ENCODE measurements at regions of chr12 and their contacts with region 1.

Region 1: DNA sequence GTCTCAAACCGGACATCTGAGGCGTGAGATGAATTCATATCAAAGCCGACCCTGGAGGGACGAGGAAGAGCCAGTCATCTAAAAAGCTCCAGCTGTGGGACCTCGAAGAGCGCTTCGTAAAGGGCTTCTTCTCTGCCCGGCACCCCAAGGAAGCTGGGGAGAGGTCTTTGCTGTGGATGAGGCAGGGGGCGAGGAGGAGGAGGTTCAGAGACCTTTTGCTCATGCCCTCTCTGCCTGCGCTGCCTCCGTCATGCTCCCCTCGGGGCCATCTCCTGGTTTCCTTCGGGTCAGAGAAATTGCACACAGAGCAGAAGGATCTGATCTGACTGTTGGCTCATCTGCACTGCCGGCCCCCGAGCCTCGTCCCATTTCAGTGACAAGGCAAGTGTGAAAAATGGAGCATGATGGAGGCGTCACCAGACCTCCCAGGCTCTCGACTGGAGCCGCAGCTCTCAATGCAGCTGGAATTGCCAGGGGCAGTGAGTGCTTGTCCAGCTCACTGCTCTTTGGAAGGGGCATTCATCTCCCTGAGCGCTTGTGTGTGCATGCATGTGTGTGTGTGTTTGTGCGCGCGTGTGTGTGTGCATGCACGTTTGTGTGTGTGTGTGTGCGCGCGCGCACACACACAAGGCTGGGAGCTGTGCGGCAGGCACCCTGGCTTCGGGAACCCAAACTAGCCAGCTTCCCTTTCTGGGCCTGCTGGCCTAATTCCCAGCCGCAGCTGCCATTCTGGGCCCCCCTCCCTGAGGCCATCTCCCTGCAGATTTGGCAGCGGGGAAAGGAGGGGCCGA is 9.2 kb downstream of the CABP1 start:
- DNase-seq: no peak
- H3K4me3 Mint-ChIP-seq: no peak overlapping the region
- H3K27ac Mint-ChIP-seq: no peak overlapping the region
- H3K4me1 Mint-ChIP-seq: peaks cover 17% of the 10 kb centered on the region
- H3K27me3 Mint-ChIP-seq: peaks cover 99% of the 10 kb centered on the region
- CTCF ChIP-seq: peak; percentile 52

Region 2: DNA sequence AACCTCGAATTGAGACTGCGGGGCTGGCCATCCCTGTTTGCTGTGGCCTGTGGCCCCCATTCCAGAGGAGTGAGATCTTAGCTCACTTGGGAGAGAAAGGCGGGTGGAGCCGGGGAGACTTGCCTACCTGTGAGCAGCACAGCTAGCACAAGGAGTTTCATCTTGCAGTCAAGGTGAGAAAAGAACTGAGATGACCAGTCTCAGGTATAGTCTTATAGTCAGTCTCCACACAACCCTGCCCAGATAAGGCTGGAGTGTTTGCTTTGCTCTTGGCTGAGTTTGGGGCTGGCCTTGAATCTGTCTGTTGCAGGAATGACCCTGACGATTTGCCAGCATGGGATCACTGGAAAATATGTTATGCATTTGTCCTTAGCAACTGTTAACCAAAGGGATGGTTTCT is 322.0 kb before region 1 on chr12 and contains the start of gene PLA2G1B:
- CTCF ChIA-PET with region 1: no interaction called
- intact Hi-C with region 1: loop called (anchors 5 kb)
- DNase-seq: no peak
- H3K4me3 Mint-ChIP-seq: no peak within 1 kb of the TSS
- H3K27ac Mint-ChIP-seq: no peak within 1 kb of the TSS
- H3K4me1 Mint-ChIP-seq: no peaks in the 10 kb centered on the region
- H3K27me3 Mint-ChIP-seq: no peaks in the 10 kb centered on the region
- CTCF ChIP-seq: no peak
- total RNA-seq, gene PLA2G1B: not detected in 2 replicates

Region 3: GRCh38 chr12:120686690-120687577 is 37.3 kb after region 1 on chr12 and contains the start of gene MLEC:
- CTCF ChIA-PET with region 1: interaction called, 11 read pairs
- intact Hi-C with region 1: no loop called
- DNase-seq: peak; percentile 99
- H3K4me3 Mint-ChIP-seq: peak within 1 kb of the TSS; percentile 91
- H3K27ac Mint-ChIP-seq: peak within 1 kb of the TSS; percentile 85
- H3K4me1 Mint-ChIP-seq: peaks cover 27% of the 10 kb centered on the region
- H3K27me3 Mint-ChIP-seq: no peaks in the 10 kb centered on the region
- CTCF ChIP-seq: no peak
- total RNA-seq, gene MLEC: 268 and 290 TPM in 2 replicates

Region 4: DNA sequence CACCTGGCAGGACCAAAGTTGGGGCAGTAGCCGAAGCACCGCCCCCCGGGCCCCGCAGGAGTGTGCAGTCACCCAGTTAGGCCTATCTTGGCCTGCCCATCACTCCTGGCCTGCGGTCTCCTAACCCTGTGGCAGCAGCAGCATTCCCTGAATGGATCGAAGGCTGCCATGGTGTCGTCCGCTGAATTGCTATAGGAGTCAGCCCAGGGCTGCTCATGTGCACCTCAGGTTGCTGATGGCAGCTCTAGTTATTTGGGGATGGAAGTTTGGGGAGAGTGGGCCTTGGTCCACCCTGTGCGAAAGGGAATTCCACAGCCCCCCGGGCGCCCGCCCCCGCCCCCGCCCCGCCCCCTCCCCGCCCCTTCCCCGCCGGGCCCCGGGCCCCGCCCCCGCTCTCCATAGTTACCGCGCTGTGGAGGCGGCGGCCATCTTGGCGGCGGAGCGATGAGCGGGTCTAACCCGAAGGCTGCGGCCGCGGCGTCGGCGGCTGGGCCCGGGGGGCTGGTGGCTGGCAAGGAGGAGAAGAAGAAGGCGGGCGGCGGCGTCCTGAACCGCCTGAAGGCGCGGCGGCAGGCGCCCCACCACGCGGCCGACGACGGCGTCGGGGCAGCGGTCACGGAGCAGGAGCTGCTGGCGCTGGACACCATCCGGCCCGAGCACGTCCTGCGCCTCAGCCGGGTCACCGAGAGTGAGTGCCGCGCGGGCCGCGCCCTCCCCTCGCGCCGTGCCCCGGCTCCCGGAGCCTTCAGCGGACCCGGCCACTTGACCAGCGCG is 60.6 kb after region 1 on chr12 and contains the start of gene UNC119B:
- CTCF ChIA-PET with region 1: interaction called, 6 read pairs
- intact Hi-C with region 1: loop called (anchors 1 kb)
- DNase-seq: peak; percentile 83
- H3K4me3 Mint-ChIP-seq: peak within 1 kb of the TSS; percentile 94
- H3K27ac Mint-ChIP-seq: peak within 1 kb of the TSS; percentile 85
- H3K4me1 Mint-ChIP-seq: peaks cover 35% of the 10 kb centered on the region
- H3K27me3 Mint-ChIP-seq: no peaks in the 10 kb centered on the region
- CTCF ChIP-seq: no peak
- total RNA-seq, gene UNC119B: 31.6 and 33.5 TPM in 2 replicates

Region 5: DNA sequence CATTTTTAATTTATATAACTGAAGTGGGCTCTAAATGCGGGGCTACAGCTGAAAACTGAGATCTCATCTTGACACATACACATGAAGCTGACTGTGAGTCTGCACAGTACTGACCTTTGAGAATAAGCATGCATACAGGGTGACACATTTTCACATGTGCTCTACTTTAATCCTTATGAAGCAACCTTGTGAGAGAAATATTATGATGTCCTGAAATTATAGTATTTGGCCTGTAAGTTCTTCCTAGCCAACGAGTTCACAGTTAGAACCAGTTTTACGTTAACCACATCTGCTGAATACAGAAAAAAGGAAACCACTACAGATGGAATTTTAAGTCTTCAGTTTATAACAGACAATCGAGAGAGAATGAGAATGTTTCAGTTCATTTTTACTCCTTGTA is 184.2 kb after region 1 on chr12:
- CTCF ChIA-PET with region 1: no interaction called
- intact Hi-C with region 1: no loop called
- DNase-seq: no peak
- H3K4me3 Mint-ChIP-seq: no peak overlapping the region
- H3K27ac Mint-ChIP-seq: no peak overlapping the region
- H3K4me1 Mint-ChIP-seq: peaks cover 38% of the 10 kb centered on the region
- H3K27me3 Mint-ChIP-seq: no peaks in the 10 kb centered on the region
- CTCF ChIP-seq: no peak

Measured in Calu3 (cell line).